Transverse colon (tissue), 4 donors: ENCODE measurements at regions of chr10 and their contacts with region 1.

Region 1: DNA sequence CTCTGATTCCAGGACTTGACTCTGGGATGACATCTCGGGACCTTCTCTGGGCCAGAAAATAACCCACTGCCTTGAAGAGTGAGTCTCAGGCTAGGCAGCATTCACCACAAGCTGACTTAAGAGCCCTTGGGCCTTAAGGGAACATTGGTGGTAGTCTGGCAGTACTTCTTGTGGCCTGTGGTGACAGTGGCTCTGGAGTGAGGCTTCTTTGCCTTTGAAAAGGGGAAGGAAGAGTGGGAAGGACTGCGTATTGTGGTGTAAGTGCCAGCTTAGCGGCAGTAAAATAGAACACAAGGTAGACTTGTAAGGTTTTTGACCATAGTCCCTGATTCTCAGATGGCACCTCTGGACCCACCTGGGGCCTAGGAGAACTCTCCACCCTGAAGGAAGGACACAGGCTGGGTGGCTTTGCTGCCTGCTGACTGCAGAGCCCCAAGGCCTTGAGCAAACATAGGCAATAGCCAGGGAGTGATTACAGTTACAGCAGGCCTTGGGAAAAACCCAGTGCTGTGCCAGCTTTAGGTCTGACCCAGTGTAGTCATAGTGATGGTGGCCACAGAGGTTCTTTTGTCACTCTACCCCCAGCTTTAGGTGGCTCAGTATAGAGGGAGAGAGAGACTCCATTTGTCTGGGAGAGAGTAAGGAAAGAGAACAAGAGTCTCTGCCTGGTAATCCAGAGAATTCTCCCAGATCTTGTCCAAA is 483.9 kb downstream of the SH2D4B start:
- DNase-seq: no peak
- H3K4me3 ChIP-seq: no peak overlapping the region
- H3K27ac ChIP-seq: no peak overlapping the region
- H3K4me1 ChIP-seq: no peaks in the 10 kb centered on the region
- H3K27me3 ChIP-seq: no peaks in the 10 kb centered on the region
- CTCF ChIP-seq: no peak
- EP300 ChIP-seq: no peak
- POLR2A ChIP-seq: no peak

Region 2: DNA sequence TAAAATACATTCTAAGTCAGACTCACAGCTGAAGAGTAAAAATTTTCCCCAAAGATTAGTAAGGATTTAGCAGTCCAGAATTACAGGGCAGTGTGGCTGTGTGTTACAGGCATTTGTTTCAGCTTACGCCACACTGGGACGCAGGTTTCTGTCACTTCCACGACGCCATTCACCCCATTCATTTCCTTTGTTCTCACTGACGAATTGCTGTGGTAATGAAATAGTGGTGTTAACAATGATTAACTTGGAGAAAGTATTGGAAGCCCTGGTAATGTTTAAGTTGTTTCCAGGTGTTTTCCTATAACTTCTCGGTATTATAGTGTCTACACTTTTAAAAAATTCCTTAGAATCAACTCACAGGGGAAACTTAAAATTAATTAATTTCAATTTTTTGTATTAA is 113.0 kb before region 1 on chr10:
- in situ Hi-C with region 1: no loop called
- intact Hi-C with region 1: no loop called
- DNase-seq: no peak
- H3K4me3 ChIP-seq: no peak overlapping the region
- H3K27ac ChIP-seq: no peak overlapping the region
- H3K4me1 ChIP-seq: no peaks in the 10 kb centered on the region
- H3K27me3 ChIP-seq: no peaks in the 10 kb centered on the region
- CTCF ChIP-seq: no peak
- EP300 ChIP-seq: no peak
- POLR2A ChIP-seq: no peak

Region 3: DNA sequence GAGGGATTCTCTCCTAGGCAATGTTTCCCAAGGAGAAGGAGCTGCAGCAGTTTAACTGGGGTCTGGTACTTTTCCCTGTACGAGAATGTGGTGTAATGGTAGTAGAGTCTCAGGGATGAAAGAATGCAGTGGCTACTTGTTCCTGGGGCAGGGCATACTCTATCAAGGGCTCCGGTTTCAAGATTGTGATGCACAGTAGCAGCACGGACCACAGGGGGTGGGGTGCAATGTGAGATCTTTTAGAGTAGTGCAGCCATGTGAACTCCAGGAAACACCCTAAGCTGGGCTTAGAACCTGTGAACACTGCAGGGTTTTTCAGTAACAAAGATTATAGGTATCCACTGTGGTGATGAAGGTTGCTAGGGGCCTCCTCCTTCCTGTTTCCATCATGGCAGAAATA is 1757.3 kb after region 1 on chr10:
- in situ Hi-C with region 1: no loop called
- intact Hi-C with region 1: loop called (anchors 10 kb)
- DNase-seq: no peak
- H3K4me3 ChIP-seq: no peak overlapping the region
- H3K27ac ChIP-seq: no peak overlapping the region
- H3K4me1 ChIP-seq: no peaks in the 10 kb centered on the region
- H3K27me3 ChIP-seq: no peaks in the 10 kb centered on the region
- CTCF ChIP-seq: no peak
- EP300 ChIP-seq: no peak
- POLR2A ChIP-seq: no peak